SK-N-SH (cell line): ENCODE measurements at regions of chr17 and their contacts with region 1.

Region 1: DNA sequence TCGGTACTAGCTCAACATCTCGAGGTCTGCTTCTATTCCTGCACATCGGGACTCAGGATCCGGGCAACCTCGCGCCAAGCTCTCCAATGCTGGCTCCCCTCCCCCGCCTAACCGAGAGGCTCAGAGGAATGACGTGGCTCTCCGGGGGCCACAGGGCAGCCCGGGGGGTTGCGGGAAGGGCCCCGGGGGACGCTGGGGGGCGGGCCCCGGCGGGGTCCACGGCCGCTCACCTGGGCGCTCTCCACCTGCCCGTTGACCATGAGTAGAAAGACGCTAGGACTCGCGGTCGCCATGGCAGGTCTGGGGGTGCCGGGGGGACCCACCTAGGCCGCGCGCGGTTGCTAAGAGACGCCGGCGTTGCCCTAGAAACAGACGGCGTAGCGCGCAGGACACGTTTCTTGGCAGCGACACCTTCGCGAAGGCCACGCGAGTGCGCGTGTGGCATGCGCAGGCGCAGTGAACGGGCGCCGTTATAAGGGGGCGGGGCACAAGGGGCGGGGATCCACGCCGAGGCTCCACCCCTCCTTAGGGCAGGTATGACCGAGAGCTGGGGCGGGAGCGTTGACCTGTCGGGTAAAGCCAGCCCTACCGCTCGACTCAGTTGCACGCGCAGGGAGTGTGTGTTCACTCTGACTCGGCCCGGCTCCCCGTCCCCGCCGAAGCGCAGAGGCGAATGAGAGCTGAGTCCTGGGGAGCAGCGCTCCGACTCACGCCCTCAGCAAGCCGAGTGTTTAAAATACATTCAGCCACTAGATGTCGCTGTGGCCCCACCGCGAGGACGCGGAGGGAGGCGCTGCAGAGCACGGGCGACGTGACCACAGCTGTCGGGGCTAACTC is at the start of gene B9D1:
- DNase-seq: peak; percentile 99
- H3K4me3 ChIP-seq: peak within 1 kb of the TSS; percentile 72 to 75
- H3K27ac ChIP-seq: peak within 1 kb of the TSS; percentile 83 to 88
- H3K4me1 ChIP-seq: peaks cover 13 to 32% of the 10 kb centered on the region in 2 experiments; a peak in 2 of 4 replicates
- H3K27me3 ChIP-seq: no peaks in the 10 kb centered on the region
- CTCF ChIP-seq: peak; percentile 89
- EP300 ChIP-seq: no peak; a peak in 1 of 4 replicates
- RAD21 ChIP-seq: peak; percentile 97
- polyA plus RNA-seq, gene B9D1: 75.0 and 81.6 TPM in 2 replicates

Region 2: GRCh38 chr17:19377602-19378392 is 15.3 kb after region 1 on chr17:
- CTCF ChIA-PET with region 1: interaction called, 37 read pairs
- POLR2A ChIA-PET with region 1: interaction called, 24 read pairs
- DNase-seq: peak; percentile 98
- H3K4me3 ChIP-seq: peak overlapping the region; percentile 87 to 88
- H3K27ac ChIP-seq: peak overlapping the region; percentile 94 to 95
- H3K4me1 ChIP-seq: peaks cover 0 to 25% of the 10 kb centered on the region in 2 experiments; a peak in 3 of 4 replicates
- H3K27me3 ChIP-seq: no peaks in the 10 kb centered on the region
- CTCF ChIP-seq: 0 out of 2 replicates have a peak, but pooled peaks have one; percentile 9
- EP300 ChIP-seq: no peak; a peak in 1 of 4 replicates
- RAD21 ChIP-seq: no peak; the same call in 1 of the 2 replicates

Region 3: DNA sequence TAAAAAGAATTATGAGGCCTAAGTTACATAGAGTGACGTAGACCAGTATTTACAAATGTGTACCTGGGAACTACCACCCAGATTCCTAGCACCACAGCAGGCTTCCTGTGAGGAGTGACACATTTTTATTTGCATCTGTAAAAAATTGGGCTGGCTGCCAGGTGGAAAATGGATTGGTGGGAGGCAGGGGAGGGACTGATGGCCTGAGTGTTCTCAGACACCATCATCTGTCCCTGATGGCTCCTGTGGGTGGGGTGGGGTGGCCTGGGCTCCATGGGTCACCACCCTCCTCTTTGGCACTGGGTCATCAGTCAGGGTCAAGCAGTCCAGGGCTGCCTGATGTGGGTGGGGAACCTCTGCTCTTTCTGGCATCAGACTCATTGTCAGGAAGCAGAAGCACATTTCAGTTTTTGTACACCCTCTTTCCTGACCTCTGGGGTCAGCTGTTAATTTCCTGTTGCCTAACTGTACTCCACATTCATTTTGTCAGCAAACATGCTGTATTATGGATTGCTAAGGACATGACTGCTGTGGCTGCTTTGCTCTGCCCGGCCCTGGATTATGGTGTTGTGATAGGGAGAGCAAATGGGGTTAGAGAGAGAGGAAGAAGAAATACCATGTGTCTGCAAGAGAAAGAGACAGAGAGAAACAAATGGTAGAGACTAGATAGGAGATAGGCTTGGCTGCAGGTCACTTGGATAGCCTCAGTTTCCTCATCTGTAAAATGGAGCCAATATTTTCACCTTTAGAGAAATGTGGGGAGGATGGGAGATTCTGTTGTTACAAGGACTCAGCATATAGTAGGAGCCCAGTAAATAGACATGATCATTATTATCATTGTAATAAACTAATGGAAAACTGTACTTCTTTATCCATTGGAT is 36.0 kb after region 1 on chr17:
- CTCF ChIA-PET with region 1: interaction called, 16 read pairs
- POLR2A ChIA-PET with region 1: no interaction called
- DNase-seq: peak; percentile 57
- H3K4me3 ChIP-seq: no peak overlapping the region
- H3K27ac ChIP-seq: peak overlapping the region in 1 of 2 experiments; percentile 62; a peak in 2 of 4 replicates
- H3K4me1 ChIP-seq: peaks cover 13 to 35% of the 10 kb centered on the region in 2 experiments; a peak in 3 of 4 replicates
- H3K27me3 ChIP-seq: no peaks in the 10 kb centered on the region
- CTCF ChIP-seq: no peak
- EP300 ChIP-seq: no peak
- RAD21 ChIP-seq: no peak

Region 4: GRCh38 chr17:19424934-19425868 is 62.7 kb after region 1 on chr17:
- CTCF ChIA-PET with region 1: interaction called, 13 read pairs
- POLR2A ChIA-PET with region 1: no interaction called
- DNase-seq: no peak
- H3K4me3 ChIP-seq: no peak overlapping the region
- H3K27ac ChIP-seq: no peak overlapping the region
- H3K4me1 ChIP-seq: no peaks in the 10 kb centered on the region
- H3K27me3 ChIP-seq: no peaks in the 10 kb centered on the region
- CTCF ChIP-seq: no peak
- EP300 ChIP-seq: no peak
- RAD21 ChIP-seq: no peak

Region 5: DNA sequence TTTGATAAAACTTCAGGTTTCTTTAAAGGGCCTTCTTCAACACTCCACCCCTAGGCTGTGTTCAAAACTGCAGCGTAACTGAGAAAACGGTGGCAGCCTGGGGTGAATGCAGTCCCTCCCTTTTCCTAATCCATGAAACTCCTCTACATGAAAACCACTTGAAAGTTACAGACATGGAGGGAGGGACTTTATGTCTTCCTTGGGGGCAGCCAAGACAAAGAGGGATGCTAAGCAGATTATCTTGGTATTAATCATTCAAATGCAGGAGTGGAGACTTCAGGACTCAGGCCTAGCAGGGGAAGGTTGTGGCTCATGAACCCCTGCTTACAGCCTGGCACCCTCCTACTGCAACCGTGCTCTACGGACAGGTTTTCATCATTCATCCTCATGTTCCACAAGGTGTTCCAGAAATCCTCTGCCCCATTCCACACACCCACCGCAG is 95.4 kb after region 1 on chr17:
- CTCF ChIA-PET with region 1: interaction called, 60 read pairs
- POLR2A ChIA-PET with region 1: no interaction called
- DNase-seq: no peak
- H3K4me3 ChIP-seq: no peak overlapping the region
- H3K27ac ChIP-seq: no peak overlapping the region
- H3K4me1 ChIP-seq: no peaks in the 10 kb centered on the region
- H3K27me3 ChIP-seq: no peaks in the 10 kb centered on the region
- CTCF ChIP-seq: no peak
- EP300 ChIP-seq: no peak
- RAD21 ChIP-seq: no peak